Sigmoid colon (tissue), 7 donors: ENCODE measurements at regions of chr1 and their contacts with region 1.

Region 1: GRCh38 chr1:25796811-25797458 is 3.1 kb upstream of the SELENON start:
- DNase-seq: peak; percentile 90
- H3K4me3 ChIP-seq: no peak overlapping the region
- H3K27ac ChIP-seq: peak overlapping the region in 2 of 4 donors; percentile 40
- H3K4me1 ChIP-seq: peaks cover 0 to 41% (median 26%) of the 10 kb centered on the region in 4 donors
- H3K27me3 ChIP-seq: no peaks in the 10 kb centered on the region
- CTCF ChIP-seq: peak; percentile 71 to 84 (median 84)
- EP300 ChIP-seq: no peak
- POLR2A ChIP-seq: no peak

Region 2: GRCh38 chr1:25608488-25609178 is 188.3 kb before region 1 on chr1:
- intact Hi-C with region 1: loop called (anchors 1 kb)
- DNase-seq: peak; percentile 93
- H3K4me3 ChIP-seq: no peak overlapping the region
- H3K27ac ChIP-seq: peak overlapping the region in 1 of 4 donors; percentile 71
- H3K4me1 ChIP-seq: peaks cover 0 to 29% (median 18%) of the 10 kb centered on the region in 4 donors
- H3K27me3 ChIP-seq: no peaks in the 10 kb centered on the region
- CTCF ChIP-seq: peak; percentile 81 to 91 (median 82)
- EP300 ChIP-seq: no peak
- POLR2A ChIP-seq: no peak

Region 3: GRCh38 chr1:25695090-25695770 is 101.7 kb before region 1 on chr1:
- intact Hi-C with region 1: loop called (anchors 5 kb)
- DNase-seq: peak; percentile 94
- H3K4me3 ChIP-seq: no peak overlapping the region
- H3K27ac ChIP-seq: peak overlapping the region; percentile 81 to 90 (median 88)
- H3K4me1 ChIP-seq: peaks cover 0 to 73% (median 69%) of the 10 kb centered on the region in 4 donors
- H3K27me3 ChIP-seq: no peaks in the 10 kb centered on the region
- CTCF ChIP-seq: peak in 1 of 4 experiments; percentile 13
- EP300 ChIP-seq: peak in 2 of 4 donors; percentile 79 to 83
- POLR2A ChIP-seq: no peak